Gastrocnemius medialis (tissue), 4 donors: ENCODE measurements at regions of chr22 and their contacts with region 1.

Region 1: GRCh38 chr22:36528795-36529751 is at the start of gene EIF3D:
- DNase-seq: peak; percentile 98 to 99
- ATAC-seq: peak; percentile 97 to 98
- H3K4me3 ChIP-seq: peak within 1 kb of the TSS; percentile 73 to 91 (median 80)
- H3K27ac ChIP-seq: peak within 1 kb of the TSS; percentile 88 to 97 (median 94)
- H3K4me1 ChIP-seq: peaks cover 11 to 12% of the 10 kb centered on the region in 2 donors
- H3K27me3 ChIP-seq: no peaks in the 10 kb centered on the region
- CTCF ChIP-seq: peak in 1 of 5 experiments; percentile 2
- POLR2A ChIP-seq: peak; percentile 65 to 84
- total RNA-seq, gene EIF3D: 208 to 319 (median 290) TPM

Region 2: DNA sequence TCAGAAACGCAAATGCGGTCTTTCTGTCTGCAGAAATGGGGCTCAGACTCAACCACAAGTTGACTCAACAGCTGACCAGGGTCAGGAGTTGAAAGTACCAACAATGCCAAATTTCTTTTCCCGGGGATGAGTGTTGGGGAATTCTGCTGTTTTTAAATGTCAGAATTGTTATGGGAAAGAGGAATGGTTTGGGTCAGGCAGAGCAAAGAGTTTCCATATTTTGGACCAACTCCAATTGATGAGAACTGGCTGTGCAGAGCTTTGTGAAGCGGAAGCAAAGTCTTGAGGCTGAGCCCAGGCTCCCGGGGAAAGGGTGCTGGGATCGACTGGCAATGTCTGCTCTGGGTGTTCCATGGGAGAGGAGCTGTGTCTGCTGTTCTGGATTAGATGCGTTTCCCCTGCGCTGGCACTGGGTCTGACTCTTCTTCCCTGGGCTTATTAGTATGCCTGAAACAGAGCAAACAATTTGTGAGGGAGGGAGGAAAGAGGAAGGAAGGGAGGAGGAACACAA is 83.9 kb before region 1 on chr22:
- in situ Hi-C with region 1: no loop called
- intact Hi-C with region 1: no loop called
- DNase-seq: no peak
- ATAC-seq: peak in 1 of 2 donors; percentile 37
- H3K4me3 ChIP-seq: no peak overlapping the region
- H3K27ac ChIP-seq: peak overlapping the region in 3 of 4 donors; percentile 22 to 53 (median 39)
- H3K4me1 ChIP-seq: peaks cover 0 to 6% of the 10 kb centered on the region in 2 donors
- H3K27me3 ChIP-seq: no peaks in the 10 kb centered on the region
- CTCF ChIP-seq: no peak
- POLR2A ChIP-seq: no peak

Region 3: GRCh38 chr22:36506637-36507517 is 22.2 kb before region 1 on chr22 and contains the start of gene FOXRED2:
- in situ Hi-C with region 1: no loop called
- intact Hi-C with region 1: loop called (anchors 2 kb)
- DNase-seq: peak; percentile 72 to 84
- ATAC-seq: peak; percentile 80 to 81
- H3K4me3 ChIP-seq: peak within 1 kb of the TSS; percentile 55 to 65 (median 60)
- H3K27ac ChIP-seq: peak within 1 kb of the TSS; percentile 77 to 91 (median 80)
- H3K4me1 ChIP-seq: peaks cover 5 to 17% of the 10 kb centered on the region in 2 donors
- H3K27me3 ChIP-seq: no peaks in the 10 kb centered on the region
- CTCF ChIP-seq: no peak
- POLR2A ChIP-seq: peak; percentile 75 to 85
- total RNA-seq, gene FOXRED2: 2.6 to 13.6 (median 5.1) TPM

Region 4: GRCh38 chr22:37186228-37186996 is 657.3 kb after region 1 on chr22:
- in situ Hi-C with region 1: no loop called
- intact Hi-C with region 1: no loop called
- DNase-seq: no peak
- ATAC-seq: peak; percentile 61 to 66
- H3K4me3 ChIP-seq: no peak overlapping the region
- H3K27ac ChIP-seq: peak overlapping the region; percentile 71 to 82 (median 76)
- H3K4me1 ChIP-seq: peaks cover 38 to 41% of the 10 kb centered on the region in 2 donors
- H3K27me3 ChIP-seq: no peaks in the 10 kb centered on the region
- CTCF ChIP-seq: no peak
- POLR2A ChIP-seq: no peak